CD8-positive, alpha-beta T cell (primary cell): ENCODE measurements at regions of chr20 and their contacts with region 1.

Region 1: DNA sequence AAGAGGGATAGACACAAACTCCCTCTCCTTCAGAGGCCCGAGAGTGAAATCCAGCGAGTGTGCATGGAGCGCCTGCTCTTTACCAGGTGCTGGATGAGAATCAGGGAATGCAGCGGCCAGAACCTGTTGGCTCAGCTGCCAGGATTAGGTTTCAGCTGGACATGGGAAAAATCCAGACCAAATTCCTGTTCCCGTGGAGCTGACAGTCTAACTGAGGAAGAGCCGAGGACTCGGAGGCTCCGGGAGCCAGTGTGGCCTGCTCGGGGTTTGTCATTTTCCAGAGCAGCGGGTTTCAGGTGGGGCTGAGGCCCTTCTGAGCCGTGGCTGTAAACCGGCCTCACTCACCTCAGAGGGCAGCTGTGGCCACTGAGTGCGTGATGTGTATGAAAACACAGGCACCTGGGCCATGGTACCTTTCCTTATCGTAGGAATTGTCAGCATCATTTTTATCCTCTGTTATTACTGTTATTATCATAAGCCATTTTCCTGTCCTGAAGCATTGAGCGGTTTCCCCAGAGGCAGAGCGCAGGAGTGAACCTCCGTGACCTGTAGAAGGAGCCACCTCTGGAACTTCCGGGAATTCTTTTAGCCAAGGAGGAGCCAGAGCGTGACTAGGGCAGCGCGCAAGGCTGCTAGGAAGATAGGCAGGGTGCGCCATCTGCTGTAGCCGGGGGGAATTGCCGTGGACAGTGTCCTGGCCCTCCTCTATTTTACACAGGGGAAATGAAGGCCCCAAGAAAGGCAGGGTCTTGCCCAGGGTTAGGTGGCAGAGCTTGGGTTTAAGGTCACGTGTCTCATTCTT is 27.3 kb downstream of the PKIG start:
- DNase-seq: peak; percentile 71 to 93 (median 87)
- ATAC-seq: peak; percentile 80
- H3K4me3 ChIP-seq: peak overlapping the region in 1 of 2 experiments; percentile 5
- H3K4me3 Mint-ChIP-seq: peak overlapping the region; percentile 53
- H3K27ac ChIP-seq: peak overlapping the region; percentile 69 to 83
- H3K27ac Mint-ChIP-seq: peak overlapping the region; percentile 98
- H3K4me1 ChIP-seq: peaks cover 48% of the 10 kb centered on the region
- H3K4me1 Mint-ChIP-seq: peaks cover 39% of the 10 kb centered on the region
- H3K27me3 ChIP-seq: no peaks in the 10 kb centered on the region
- H3K27me3 Mint-ChIP-seq: no peaks in the 10 kb centered on the region
- CTCF ChIP-seq: peak; percentile 92

Region 2: GRCh38 chr20:44388466-44389023 is 221.2 kb before region 1 on chr20:
- CTCF ChIA-PET with region 1: interaction called, 23 read pairs
- POLR2A ChIA-PET with region 1: no interaction called
- intact Hi-C with region 1: loop called (anchors 1 kb)
- DNase-seq: peak; percentile 13 to 77 (median 63)
- ATAC-seq: peak; percentile 88
- H3K4me3 ChIP-seq: no peak overlapping the region
- H3K4me3 Mint-ChIP-seq: no peak overlapping the region
- H3K27ac ChIP-seq: no peak overlapping the region
- H3K27ac Mint-ChIP-seq: no peak overlapping the region
- H3K4me1 ChIP-seq: no peaks in the 10 kb centered on the region
- H3K4me1 Mint-ChIP-seq: peaks cover 10% of the 10 kb centered on the region
- H3K27me3 ChIP-seq: no peaks in the 10 kb centered on the region
- H3K27me3 Mint-ChIP-seq: peaks cover 14% of the 10 kb centered on the region
- CTCF ChIP-seq: peak; percentile 68

Region 3: DNA sequence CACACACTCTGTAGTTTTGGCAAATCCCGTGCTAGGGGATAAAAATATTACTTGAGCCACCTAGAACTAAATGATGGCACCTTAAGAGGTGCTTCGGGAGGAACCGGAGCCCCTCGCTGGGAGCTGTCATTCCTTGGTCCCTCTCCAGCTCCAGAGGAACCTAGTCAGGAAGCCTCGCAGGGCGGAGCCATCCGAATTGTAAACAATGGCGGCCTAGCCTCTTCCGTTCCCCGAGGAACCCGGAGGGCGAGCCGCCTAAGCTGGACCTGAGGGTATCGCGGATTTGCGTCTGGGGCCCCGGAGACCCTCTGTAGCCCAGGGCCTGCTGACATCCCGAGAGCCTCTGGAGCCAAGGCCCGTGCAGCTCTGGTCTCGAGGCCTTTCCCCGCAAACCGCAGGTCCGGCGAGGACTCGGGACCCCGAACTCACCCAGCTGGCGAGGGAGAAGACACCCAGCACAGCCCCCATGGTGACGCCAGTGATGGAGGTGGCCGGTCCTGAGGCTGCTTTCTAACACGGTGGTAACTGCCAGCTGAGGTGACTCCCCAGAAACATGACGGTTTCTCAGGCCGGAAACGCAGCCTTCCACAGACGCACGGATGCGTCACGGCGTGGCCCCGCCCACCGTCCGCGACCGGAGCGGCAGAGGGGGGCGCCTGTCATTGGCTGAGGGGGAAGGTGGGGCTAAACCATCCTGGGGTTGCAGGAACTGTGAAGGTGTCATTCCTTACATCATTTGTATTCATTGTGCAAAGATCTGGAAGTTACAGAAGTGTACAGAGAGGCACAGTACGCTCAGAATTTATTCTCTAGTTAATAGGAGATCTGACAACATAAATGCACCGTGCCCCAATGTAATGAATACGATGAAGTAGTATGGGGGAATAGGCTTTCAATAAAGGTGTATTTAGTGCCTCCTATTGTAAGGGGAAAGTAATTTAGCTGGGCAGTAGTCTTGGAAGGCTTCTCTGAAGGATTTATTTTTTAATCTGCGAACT is 87.9 kb before region 1 on chr20 and contains the start of gene SERINC3:
- CTCF ChIA-PET with region 1: interaction called, 17 read pairs
- POLR2A ChIA-PET with region 1: interaction called, 5 read pairs
- intact Hi-C with region 1: loop called (anchors 1 kb)
- DNase-seq: peak; percentile 96 to 99 (median 98)
- ATAC-seq: peak; percentile 93
- H3K4me3 ChIP-seq: peak within 1 kb of the TSS; percentile 88 to 100
- H3K4me3 Mint-ChIP-seq: peak within 1 kb of the TSS; percentile 86
- H3K27ac ChIP-seq: peak within 1 kb of the TSS; percentile 98 to 100
- H3K27ac Mint-ChIP-seq: peak within 1 kb of the TSS; percentile 96
- H3K4me1 ChIP-seq: peaks cover 52% of the 10 kb centered on the region
- H3K4me1 Mint-ChIP-seq: peaks cover 55% of the 10 kb centered on the region
- H3K27me3 ChIP-seq: no peaks in the 10 kb centered on the region
- H3K27me3 Mint-ChIP-seq: no peaks in the 10 kb centered on the region
- CTCF ChIP-seq: no peak
- total RNA-seq, gene SERINC3: 39.0 to 46.0 TPM

Region 4: GRCh38 chr20:44566013-44566412 is 43.7 kb before region 1 on chr20:
- CTCF ChIA-PET with region 1: no interaction called
- POLR2A ChIA-PET with region 1: no interaction called
- intact Hi-C with region 1: no loop called
- DNase-seq: no peak
- ATAC-seq: no peak
- H3K4me3 ChIP-seq: no peak overlapping the region
- H3K4me3 Mint-ChIP-seq: no peak overlapping the region
- H3K27ac ChIP-seq: no peak overlapping the region
- H3K27ac Mint-ChIP-seq: no peak overlapping the region
- H3K4me1 ChIP-seq: no peaks in the 10 kb centered on the region
- H3K4me1 Mint-ChIP-seq: peaks cover 5% of the 10 kb centered on the region
- H3K27me3 ChIP-seq: no peaks in the 10 kb centered on the region
- H3K27me3 Mint-ChIP-seq: no peaks in the 10 kb centered on the region
- CTCF ChIP-seq: no peak

Region 5: GRCh38 chr20:44598423-44599305 is 11.0 kb before region 1 on chr20:
- CTCF ChIA-PET with region 1: interaction called, 17 read pairs
- POLR2A ChIA-PET with region 1: interaction called, 7 read pairs
- intact Hi-C with region 1: no loop called
- DNase-seq: peak in 1 of 9 experiments; percentile 41
- ATAC-seq: peak; percentile 38
- H3K4me3 ChIP-seq: peak overlapping the region in 1 of 2 experiments; percentile 10
- H3K4me3 Mint-ChIP-seq: peak overlapping the region; percentile 67
- H3K27ac ChIP-seq: peak overlapping the region in 1 of 2 experiments; percentile 38
- H3K27ac Mint-ChIP-seq: peak overlapping the region; percentile 87
- H3K4me1 ChIP-seq: peaks cover 26% of the 10 kb centered on the region
- H3K4me1 Mint-ChIP-seq: peaks cover 39% of the 10 kb centered on the region
- H3K27me3 ChIP-seq: no peaks in the 10 kb centered on the region
- H3K27me3 Mint-ChIP-seq: no peaks in the 10 kb centered on the region
- CTCF ChIP-seq: peak; percentile 13

Region 6: GRCh38 chr20:44633187-44633810 is 23.6 kb after region 1 on chr20:
- CTCF ChIA-PET with region 1: interaction called, 10 read pairs
- POLR2A ChIA-PET with region 1: no interaction called
- intact Hi-C with region 1: no loop called
- DNase-seq: no peak
- ATAC-seq: no peak
- H3K4me3 ChIP-seq: no peak overlapping the region
- H3K4me3 Mint-ChIP-seq: no peak overlapping the region
- H3K27ac ChIP-seq: no peak overlapping the region
- H3K27ac Mint-ChIP-seq: no peak overlapping the region
- H3K4me1 ChIP-seq: no peaks in the 10 kb centered on the region
- H3K4me1 Mint-ChIP-seq: no peaks in the 10 kb centered on the region
- H3K27me3 ChIP-seq: no peaks in the 10 kb centered on the region
- H3K27me3 Mint-ChIP-seq: no peaks in the 10 kb centered on the region
- CTCF ChIP-seq: no peak

Region 7: DNA sequence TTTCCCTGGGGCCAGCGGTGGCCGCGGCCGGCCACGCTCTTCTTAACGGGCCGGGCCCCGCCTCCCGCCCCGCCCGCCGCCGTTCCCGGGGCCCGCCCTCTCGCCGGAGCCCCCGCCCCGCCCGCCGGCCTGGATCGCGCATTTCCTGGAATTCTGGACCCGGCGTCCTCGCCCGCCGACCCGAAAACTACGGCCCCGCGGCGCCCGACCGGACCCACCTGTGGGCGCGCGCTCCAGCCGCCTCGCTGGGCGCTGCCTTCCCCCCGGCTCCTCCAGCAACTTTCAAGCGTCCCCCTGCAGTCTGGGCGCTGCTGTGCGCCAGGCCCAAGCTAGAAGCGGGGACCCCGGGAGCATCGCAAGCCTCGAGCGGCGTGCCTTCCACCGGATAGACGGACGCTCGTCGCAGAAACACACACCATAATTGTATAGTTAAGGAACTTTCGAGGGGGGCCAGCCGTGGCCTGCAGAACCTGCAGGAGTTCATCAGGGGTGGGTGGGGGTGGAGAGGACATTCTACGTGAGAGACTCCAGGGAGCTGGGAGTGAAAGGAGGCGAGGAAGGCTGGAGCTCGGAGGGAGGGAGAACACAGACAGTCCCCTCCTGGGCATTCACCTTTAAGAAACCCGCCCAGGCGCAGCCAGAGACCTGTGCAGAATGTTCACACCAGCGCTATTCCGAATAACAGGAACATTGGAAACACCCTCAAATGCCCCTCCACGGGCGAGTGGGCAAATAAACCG is 42.1 kb after region 1 on chr20 and contains the start of gene ADA:
- CTCF ChIA-PET with region 1: interaction called, 27 read pairs
- POLR2A ChIA-PET with region 1: interaction called, 3 read pairs
- intact Hi-C with region 1: loop called in 1 of 2 experiments (anchors 2 kb)
- DNase-seq: peak in 8 of 9 experiments; percentile 19 to 75 (median 55)
- ATAC-seq: peak; percentile 66
- H3K4me3 ChIP-seq: peak within 1 kb of the TSS; percentile 87 to 97
- H3K4me3 Mint-ChIP-seq: peak within 1 kb of the TSS; percentile 88
- H3K27ac ChIP-seq: peak within 1 kb of the TSS; percentile 70 to 75
- H3K27ac Mint-ChIP-seq: peak within 1 kb of the TSS; percentile 91
- H3K4me1 ChIP-seq: peaks cover 47% of the 10 kb centered on the region
- H3K4me1 Mint-ChIP-seq: peaks cover 46% of the 10 kb centered on the region
- H3K27me3 ChIP-seq: no peaks in the 10 kb centered on the region
- H3K27me3 Mint-ChIP-seq: no peaks in the 10 kb centered on the region
- CTCF ChIP-seq: no peak
- total RNA-seq, gene ADA: 27.9 to 30.2 TPM

Region 8: DNA sequence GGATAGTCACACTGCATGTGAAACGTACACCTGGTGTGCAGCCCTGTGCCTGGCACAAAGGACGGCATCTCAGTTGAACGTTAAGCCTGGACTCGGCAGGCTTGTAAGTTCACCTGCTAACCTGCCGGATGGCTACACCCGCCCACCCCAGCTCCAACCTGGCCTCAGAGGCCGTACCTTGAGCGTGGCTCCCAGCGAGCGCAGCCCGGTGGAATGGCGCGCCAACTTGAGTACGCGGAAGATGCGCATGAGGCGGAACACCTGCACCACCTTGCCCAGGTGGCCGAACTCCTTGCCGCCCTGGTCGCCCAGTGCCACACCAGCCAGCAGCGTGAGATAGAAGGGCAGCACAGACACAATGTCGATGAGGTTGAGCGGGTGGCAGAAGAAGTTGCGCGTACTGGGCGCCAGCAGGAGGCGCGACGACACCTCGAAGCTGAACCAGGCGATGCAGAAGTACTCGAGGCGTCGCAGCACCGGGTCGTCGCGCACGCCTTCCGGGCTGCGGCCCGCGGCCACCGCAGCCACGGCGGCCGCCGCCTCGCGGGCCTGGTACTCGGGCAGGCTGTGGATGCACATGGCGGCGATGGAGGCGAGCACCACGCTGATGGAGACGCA is 487.9 kb after region 1 on chr20:
- CTCF ChIA-PET with region 1: no interaction called
- POLR2A ChIA-PET with region 1: no interaction called
- intact Hi-C with region 1: no loop called
- DNase-seq: peak in 6 of 9 experiments; percentile 13 to 69 (median 44)
- ATAC-seq: peak; percentile 64
- H3K4me3 ChIP-seq: peak overlapping the region in 1 of 2 experiments; percentile 29
- H3K4me3 Mint-ChIP-seq: peak overlapping the region; percentile 63
- H3K27ac ChIP-seq: no peak overlapping the region
- H3K27ac Mint-ChIP-seq: no peak overlapping the region
- H3K4me1 ChIP-seq: peaks cover 10% of the 10 kb centered on the region
- H3K4me1 Mint-ChIP-seq: peaks cover 20% of the 10 kb centered on the region
- H3K27me3 ChIP-seq: peaks cover 5 to 16% of the 10 kb centered on the region in 2 experiments
- H3K27me3 Mint-ChIP-seq: peaks cover 38% of the 10 kb centered on the region
- CTCF ChIP-seq: peak; percentile 34